Prostate gland (tissue), 2 donors: ENCODE measurements at regions of chr6 and their contacts with region 1.

Region 1: DNA sequence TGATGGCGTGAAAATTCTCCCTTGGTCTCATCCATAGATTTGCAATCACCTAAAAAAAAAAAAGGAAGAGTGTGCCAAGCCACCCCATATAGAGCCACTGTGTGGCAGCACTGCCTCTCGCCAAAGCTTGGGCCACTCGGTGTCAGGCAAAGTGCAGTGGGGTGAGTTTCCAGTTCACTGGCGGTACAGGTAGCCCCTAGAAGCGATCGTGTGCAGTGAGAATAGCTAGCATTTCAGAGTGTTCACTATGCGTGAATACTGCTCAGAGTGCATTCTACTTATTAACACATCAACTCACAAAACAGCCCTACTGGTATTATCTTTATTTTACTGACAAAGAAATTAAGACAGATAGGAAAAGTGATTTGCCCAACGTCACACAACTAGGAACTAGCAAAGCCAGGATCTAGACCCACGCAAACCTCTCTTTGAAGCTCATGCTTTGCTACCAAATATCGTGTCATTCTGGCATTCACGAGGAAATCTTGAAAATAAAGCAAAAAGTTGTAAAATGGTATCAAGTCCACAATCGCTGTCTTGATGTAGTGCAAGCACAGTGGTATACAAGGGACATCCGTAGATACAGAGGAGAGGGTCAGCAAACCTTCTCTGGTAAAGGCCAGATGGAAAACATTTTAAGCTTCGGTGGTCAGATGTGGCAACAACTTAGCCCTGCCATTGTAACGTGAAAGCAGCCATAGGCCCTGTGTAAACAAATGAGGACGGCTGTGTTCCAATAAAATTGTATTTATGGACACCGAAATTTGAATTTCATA is 10.4 kb upstream of the GCNT2 start:
- DNase-seq: peak; percentile 69
- H3K4me3 ChIP-seq: no peak overlapping the region
- H3K27ac ChIP-seq: peak overlapping the region; percentile 59 to 64
- H3K4me1 ChIP-seq: peaks cover 3% of the 10 kb centered on the region
- H3K27me3 ChIP-seq: no peaks in the 10 kb centered on the region
- CTCF ChIP-seq: peak; percentile 43 to 66 (median 60)
- POLR2A ChIP-seq: no peak

Region 2: GRCh38 chr6:10451828-10452509 is 58.8 kb before region 1 on chr6:
- intact Hi-C with region 1: no loop called
- DNase-seq: peak; percentile 51
- H3K4me3 ChIP-seq: no peak overlapping the region
- H3K27ac ChIP-seq: no peak overlapping the region
- H3K4me1 ChIP-seq: no peaks in the 10 kb centered on the region
- H3K27me3 ChIP-seq: no peaks in the 10 kb centered on the region
- CTCF ChIP-seq: no peak
- POLR2A ChIP-seq: no peak

Region 3: GRCh38 chr6:10626154-10626741 is 115.5 kb after region 1 on chr6:
- intact Hi-C with region 1: loop called (anchors 10 kb)
- DNase-seq: no peak
- H3K4me3 ChIP-seq: no peak overlapping the region
- H3K27ac ChIP-seq: no peak overlapping the region
- H3K4me1 ChIP-seq: no peaks in the 10 kb centered on the region
- H3K27me3 ChIP-seq: no peaks in the 10 kb centered on the region
- CTCF ChIP-seq: no peak
- POLR2A ChIP-seq: no peak

Region 4: GRCh38 chr6:10694302-10695085 is 183.7 kb after region 1 on chr6 and contains the starts of genes C6orf52 and PAK1IP1:
- intact Hi-C with region 1: loop called (anchors 2 kb)
- DNase-seq: peak; percentile 94
- H3K4me3 ChIP-seq: peak within 1 kb of the TSS; percentile 68 to 90
- H3K27ac ChIP-seq: peak within 1 kb of the TSS; percentile 92 to 94
- H3K4me1 ChIP-seq: peaks cover 9% of the 10 kb centered on the region
- H3K27me3 ChIP-seq: no peaks in the 10 kb centered on the region
- CTCF ChIP-seq: peak in 1 of 4 experiments; percentile 4
- POLR2A ChIP-seq: peak; percentile 80
- total RNA-seq, gene C6orf52: 3.3 TPM in 1 of 2 donors, not detected in the other
- total RNA-seq, gene PAK1IP1: 12.2 to 36.7 TPM

Region 5: DNA sequence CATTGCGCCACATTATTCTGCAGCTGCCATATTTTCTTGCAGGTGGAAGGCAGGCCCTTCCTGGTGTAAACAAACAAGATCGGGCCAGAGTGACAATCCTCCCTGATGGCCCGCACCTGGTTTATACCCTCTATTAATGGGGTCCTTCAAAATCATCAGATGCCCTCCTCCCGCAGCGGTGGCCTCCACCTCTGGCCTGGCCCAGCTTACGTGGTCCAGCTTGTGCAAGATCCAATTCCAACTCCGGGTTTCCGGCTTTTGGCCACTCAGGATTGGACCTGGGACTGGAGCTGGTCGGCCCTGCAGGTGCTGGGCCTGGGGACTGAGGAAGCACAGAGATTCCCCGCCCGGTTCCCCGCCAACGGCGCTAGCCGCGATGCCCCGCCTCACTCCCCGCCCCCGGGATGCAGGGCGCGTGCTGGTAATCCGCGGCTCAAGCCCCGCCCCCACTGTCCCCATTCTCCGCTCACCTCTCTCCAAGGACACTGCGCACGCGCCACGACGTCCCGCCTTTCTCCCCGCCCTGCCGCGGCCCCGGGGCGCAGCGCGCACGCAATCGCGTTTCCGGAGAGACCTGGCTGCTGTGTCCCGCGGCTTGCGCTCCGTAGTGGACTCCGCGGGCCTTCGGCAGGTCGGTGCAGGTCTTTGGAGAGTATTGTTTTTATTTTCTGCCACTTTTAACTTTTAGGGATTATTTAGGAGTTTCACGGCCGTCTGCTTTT is 236.6 kb after region 1 on chr6 and contains the start of gene TMEM14B:
- intact Hi-C with region 1: loop called (anchors 10 kb)
- DNase-seq: peak; percentile 100
- H3K4me3 ChIP-seq: peak within 1 kb of the TSS; percentile 55 to 64
- H3K27ac ChIP-seq: peak within 1 kb of the TSS; percentile 74 to 80
- H3K4me1 ChIP-seq: peaks cover 14% of the 10 kb centered on the region
- H3K27me3 ChIP-seq: no peaks in the 10 kb centered on the region
- CTCF ChIP-seq: peak in 2 of 4 experiments; percentile 13 to 21
- POLR2A ChIP-seq: peak; percentile 79
- total RNA-seq, gene TMEM14B: 81.1 to 165 TPM

Region 6: DNA sequence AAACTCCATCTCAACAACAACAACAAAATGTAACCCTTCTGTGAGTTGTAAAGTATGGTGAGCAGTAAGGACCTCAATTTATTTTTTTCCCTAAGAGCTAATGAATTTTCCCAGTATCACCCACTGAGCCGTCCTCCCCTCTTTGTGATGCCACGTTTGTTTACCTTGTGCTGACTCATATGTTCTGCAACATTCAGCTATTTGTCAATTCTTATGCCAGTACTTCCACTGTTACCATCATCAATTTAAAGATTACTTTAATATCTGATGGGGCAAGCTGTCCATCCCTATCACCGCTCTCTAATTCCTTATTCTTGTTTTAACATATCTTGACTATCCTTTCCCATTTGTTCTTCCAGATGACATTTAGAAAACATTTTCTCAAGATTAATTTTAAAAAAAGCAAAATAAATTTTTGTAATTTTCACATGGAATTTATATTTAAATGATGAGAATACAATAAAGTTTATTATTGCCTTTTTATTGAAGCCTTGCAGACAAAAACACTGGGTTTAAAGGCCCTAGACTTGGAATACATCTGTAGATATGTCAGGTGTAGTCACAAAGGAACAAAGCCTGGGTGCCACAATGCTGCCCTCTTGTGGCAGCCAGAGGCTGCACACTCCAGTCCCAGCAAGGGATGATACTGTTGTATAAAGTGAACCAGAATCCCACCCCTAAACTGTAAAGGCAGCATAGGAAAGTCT is 290.2 kb after region 1 on chr6:
- intact Hi-C with region 1: loop called (anchors 2 kb)
- DNase-seq: peak; percentile 48
- H3K4me3 ChIP-seq: no peak overlapping the region
- H3K27ac ChIP-seq: no peak overlapping the region
- H3K4me1 ChIP-seq: no peaks in the 10 kb centered on the region
- H3K27me3 ChIP-seq: no peaks in the 10 kb centered on the region
- CTCF ChIP-seq: peak; percentile 86 to 95 (median 89)
- POLR2A ChIP-seq: no peak

Region 7: GRCh38 chr6:10873313-10873712 is 362.5 kb after region 1 on chr6:
- intact Hi-C with region 1: no loop called
- DNase-seq: no peak
- H3K4me3 ChIP-seq: no peak overlapping the region
- H3K27ac ChIP-seq: no peak overlapping the region
- H3K4me1 ChIP-seq: no peaks in the 10 kb centered on the region
- H3K27me3 ChIP-seq: no peaks in the 10 kb centered on the region
- CTCF ChIP-seq: no peak
- POLR2A ChIP-seq: no peak